ENCODE measurements at regions of chr6 and their contacts with region 1.

Region 1: DNA sequence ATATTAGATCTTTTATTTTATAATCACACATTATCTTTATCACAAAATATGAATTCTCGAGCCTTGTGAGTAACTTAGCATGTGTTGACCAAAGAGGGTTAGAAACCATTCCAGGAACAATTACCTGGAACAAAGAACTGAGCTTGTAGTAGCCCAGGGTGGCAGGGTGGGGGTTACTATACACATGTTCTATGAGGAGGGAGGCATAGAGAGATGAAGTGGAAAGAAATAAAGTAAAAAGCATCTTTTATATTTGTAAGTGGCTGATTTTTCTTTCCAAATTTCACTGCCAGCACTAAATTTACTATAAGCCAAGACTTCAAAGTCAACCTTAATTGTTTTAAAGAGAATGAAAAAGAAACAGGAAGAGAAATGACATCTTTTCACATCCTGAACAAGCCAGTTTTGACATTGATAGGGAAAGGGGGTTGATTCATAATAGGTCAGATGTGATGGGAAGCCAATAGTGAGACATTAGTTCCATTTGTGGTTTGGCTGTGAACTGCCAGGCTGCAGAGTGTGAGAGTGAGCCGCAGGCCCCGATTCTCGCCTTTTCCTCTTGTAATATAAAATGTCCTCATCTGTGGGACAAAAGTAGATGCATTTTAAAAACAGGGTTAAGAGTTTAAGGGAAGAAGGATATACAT is 52.7 kb upstream of the MYB start:
- DNase-seq: no peak
- ATAC-seq: peak; percentile 62
- H3K4me3 Mint-ChIP-seq: no peak overlapping the region
- H3K27ac Mint-ChIP-seq: peak overlapping the region; percentile 38
- H3K4me1 Mint-ChIP-seq: peaks cover 14% of the 10 kb centered on the region
- H3K27me3 Mint-ChIP-seq: no peaks in the 10 kb centered on the region
- CTCF ChIP-seq: no peak

Region 2: GRCh38 chr6:135114355-135115145 is 13.8 kb before region 1 on chr6:
- CTCF ChIA-PET with region 1: interaction called, 3 read pairs
- POLR2A ChIA-PET with region 1: no interaction called
- intact Hi-C with region 1: loop called (anchors 1 kb)
- DNase-seq: no peak
- ATAC-seq: peak; percentile 54
- H3K4me3 Mint-ChIP-seq: no peak overlapping the region
- H3K27ac Mint-ChIP-seq: no peak overlapping the region
- H3K4me1 Mint-ChIP-seq: peaks cover 23% of the 10 kb centered on the region
- H3K27me3 Mint-ChIP-seq: peaks cover 9% of the 10 kb centered on the region
- CTCF ChIP-seq: no peak

Region 3: GRCh38 chr6:135555550-135555949 is 427.2 kb after region 1 on chr6:
- CTCF ChIA-PET with region 1: no interaction called
- POLR2A ChIA-PET with region 1: no interaction called
- intact Hi-C with region 1: no loop called
- DNase-seq: no peak
- ATAC-seq: peak; percentile 83
- H3K4me3 Mint-ChIP-seq: no peak overlapping the region
- H3K27ac Mint-ChIP-seq: no peak overlapping the region
- H3K4me1 Mint-ChIP-seq: peaks cover 11% of the 10 kb centered on the region
- H3K27me3 Mint-ChIP-seq: peaks cover 2% of the 10 kb centered on the region
- CTCF ChIP-seq: no peak

Measured in activated B cell treated with CpG ODN at 0.5 μM for 24 hours (primary cell).